ENCODE measurements at regions of chr4 and their contacts with region 1.

Region 1: DNA sequence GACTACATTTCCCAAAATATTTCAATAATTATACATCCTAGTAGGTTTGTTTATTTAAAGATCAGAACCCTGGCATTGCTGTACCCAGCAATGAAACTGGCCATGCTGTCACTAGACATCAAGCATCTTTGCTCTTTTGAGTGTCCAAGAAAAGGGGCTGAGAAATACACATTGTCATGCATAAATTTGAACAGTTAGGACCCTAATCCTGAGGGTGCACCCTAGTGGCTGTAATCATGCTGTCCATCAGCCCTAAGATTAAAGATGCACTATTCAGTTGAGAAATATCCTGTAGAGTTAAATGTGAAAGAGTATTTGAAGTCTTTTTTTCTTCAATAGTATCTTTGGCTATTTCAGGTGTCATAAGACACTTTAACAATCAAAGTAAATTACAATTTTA is 108.8 kb downstream of the NFKB1 start:
- DNase-seq: peak; percentile 22
- ATAC-seq: no peak
- H3K4me3 ChIP-seq: no peak overlapping the region
- H3K27ac ChIP-seq: no peak overlapping the region
- H3K4me1 ChIP-seq: peaks cover 29% of the 10 kb centered on the region
- H3K27me3 ChIP-seq: no peaks in the 10 kb centered on the region
- CTCF ChIP-seq: peak; percentile 52

Region 2: GRCh38 chr4:102449751-102450352 is 160.2 kb before region 1 on chr4:
- CTCF ChIA-PET with region 1: interaction called, 6 read pairs
- POLR2A ChIA-PET with region 1: no interaction called
- intact Hi-C with region 1: loop called (anchors 2 kb)
- DNase-seq: peak; percentile 73
- ATAC-seq: peak; percentile 71
- H3K4me3 ChIP-seq: no peak overlapping the region
- H3K27ac ChIP-seq: no peak overlapping the region
- H3K4me1 ChIP-seq: no peaks in the 10 kb centered on the region
- H3K27me3 ChIP-seq: no peaks in the 10 kb centered on the region
- CTCF ChIP-seq: peak; percentile 75

Region 3: DNA sequence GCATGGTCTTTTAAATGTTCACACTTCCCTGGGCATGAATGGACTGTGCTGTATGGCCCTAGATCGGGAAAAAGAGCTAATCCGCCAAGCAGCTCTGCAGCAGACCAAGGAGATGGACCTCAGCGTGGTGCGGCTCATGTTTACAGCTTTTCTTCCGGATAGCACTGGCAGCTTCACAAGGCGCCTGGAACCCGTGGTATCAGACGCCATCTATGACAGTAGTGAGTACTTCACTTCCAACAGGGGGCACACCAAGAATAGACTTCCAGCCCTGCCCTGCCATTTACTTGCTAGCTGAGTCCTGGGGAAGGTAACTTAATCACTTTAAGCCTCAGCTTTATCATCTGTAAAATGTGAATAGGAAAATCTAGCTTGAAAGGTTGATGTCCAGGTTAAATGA is 31.2 kb before region 1 on chr4:
- CTCF ChIA-PET with region 1: no interaction called
- POLR2A ChIA-PET with region 1: no interaction called
- intact Hi-C with region 1: loop called (anchors 5 kb)
- DNase-seq: no peak
- ATAC-seq: no peak
- H3K4me3 ChIP-seq: no peak overlapping the region
- H3K27ac ChIP-seq: no peak overlapping the region
- H3K4me1 ChIP-seq: peaks cover 46% of the 10 kb centered on the region
- H3K27me3 ChIP-seq: no peaks in the 10 kb centered on the region
- CTCF ChIP-seq: peak; percentile 22; the same call in 1 of the 2 replicates

Measured in PC-3 (cell line).